ENCODE measurements at regions of chr3 and their contacts with region 1.

Region 1: DNA sequence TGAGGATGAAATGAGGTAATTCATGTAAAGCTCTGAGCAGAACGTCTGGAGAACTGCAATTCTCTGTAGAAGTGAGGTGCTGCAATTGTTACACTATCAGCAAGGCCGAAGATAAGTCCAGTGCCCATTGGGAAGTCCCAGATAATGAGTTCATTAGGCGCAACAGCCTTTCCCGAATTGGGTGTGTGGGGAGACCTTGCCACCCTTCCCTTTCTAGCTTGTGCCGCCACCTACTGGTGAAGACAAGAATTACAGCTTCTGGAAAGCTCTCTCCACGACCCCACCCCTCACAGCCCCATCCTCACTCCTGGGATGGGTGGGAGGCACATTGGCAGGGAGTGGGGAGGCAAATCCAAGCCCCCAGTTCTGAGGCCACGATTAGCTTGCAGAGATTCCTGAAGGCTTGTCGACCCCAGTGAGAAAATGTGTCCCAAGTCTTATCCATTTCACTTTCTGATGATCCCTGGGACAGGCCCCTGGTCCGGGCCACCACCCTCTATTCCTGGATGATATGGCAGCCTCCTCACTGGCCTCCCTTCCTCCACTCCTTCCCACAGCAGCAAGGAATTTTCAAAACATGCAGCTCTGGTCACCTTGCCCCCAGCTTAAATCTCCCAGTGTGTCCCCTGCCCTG is 36.4 kb downstream of the FAM3D start:
- DNase-seq: peak in 1 of 2 donors; percentile 62
- ATAC-seq: peak; percentile 83
- H3K4me3 ChIP-seq: no peak overlapping the region
- H3K27ac ChIP-seq: no peak overlapping the region
- H3K4me1 ChIP-seq: no peaks in the 10 kb centered on the region
- H3K27me3 ChIP-seq: no peaks in the 10 kb centered on the region

Region 2: GRCh38 chr3:58568572-58569286 is 61.5 kb before region 1 on chr3:
- intact Hi-C with region 1: loop called (anchors 1 to 2 kb)
- DNase-seq: peak; percentile 77 to 94
- ATAC-seq: peak; percentile 73
- H3K4me3 ChIP-seq: no peak overlapping the region
- H3K27ac ChIP-seq: no peak overlapping the region
- H3K4me1 ChIP-seq: no peaks in the 10 kb centered on the region
- H3K27me3 ChIP-seq: no peaks in the 10 kb centered on the region

Region 3: GRCh38 chr3:58585005-58585786 is 45.0 kb before region 1 on chr3:
- intact Hi-C with region 1: loop called in 1 of 2 experiments (anchors 5 kb)
- DNase-seq: peak; percentile 90 to 95
- ATAC-seq: peak; percentile 93
- H3K4me3 ChIP-seq: peak overlapping the region; percentile 32 to 38
- H3K27ac ChIP-seq: no peak overlapping the region
- H3K4me1 ChIP-seq: no peaks in the 10 kb centered on the region
- H3K27me3 ChIP-seq: no peaks in the 10 kb centered on the region